Posterior cingulate gyrus (tissue), 11 donors: ENCODE measurements at regions of chr9 and their contacts with region 1.

Region 1: DNA sequence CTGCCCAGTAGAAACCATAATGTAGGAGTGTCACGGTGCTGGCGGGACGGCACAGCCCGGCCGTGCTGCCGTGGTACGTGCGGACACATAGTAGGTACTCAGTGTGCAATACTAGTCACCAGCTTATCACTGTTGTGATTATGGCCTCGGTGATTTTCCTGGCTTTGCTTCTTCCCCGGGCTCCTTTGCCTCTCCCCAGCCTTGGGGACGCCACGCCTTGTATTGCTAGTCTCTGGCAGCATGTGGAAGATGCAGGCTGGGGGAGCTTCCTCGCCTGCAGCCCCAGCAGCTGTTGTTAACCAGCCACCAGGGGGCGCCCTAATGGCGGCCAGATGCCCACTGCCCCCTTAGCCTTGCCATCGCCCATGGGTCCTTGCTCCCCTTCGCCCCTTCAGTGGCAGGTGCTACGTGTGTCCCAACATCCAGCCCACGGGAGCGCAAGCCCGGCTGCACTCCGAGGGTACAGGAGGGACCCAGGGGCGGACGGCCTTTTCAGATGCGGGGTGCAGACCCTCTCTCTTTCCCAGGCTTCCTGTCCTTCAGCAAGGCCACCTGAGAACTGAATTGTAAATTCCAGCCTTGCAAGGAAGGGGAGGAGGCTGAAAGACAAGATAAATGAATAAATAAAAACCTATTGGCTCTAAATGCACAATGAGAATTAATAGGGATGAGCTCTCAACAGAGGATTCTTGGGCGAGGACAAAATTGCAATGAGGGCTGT is 8.0 kb downstream of the NTNG2 start:
- DNase-seq: peak in 6 of 10 donors; percentile 61 to 94 (median 76)

Region 2: GRCh38 chr9:132079391-132080091 is 90.3 kb before region 1 on chr9 and contains the start of gene MED27:
- intact Hi-C with region 1: loop called (anchors 10 kb)
- DNase-seq: peak; percentile 90 to 99 (median 95)